Activated CD8-positive, alpha-beta memory T cell treated with anti-CD3 and anti-CD28 coated beads, Interleukin-2, amount 10 ng/mL, durations not matched to agents 7 days and 5 days (primary cell): ENCODE measurements at regions of chr5 and their contacts with region 1.

Region 1: GRCh38 chr5:170333161-170333910 is 35.8 kb upstream of the LCP2 start:
- DNase-seq: peak; percentile 86
- ATAC-seq: peak; percentile 46
- H3K4me3 Mint-ChIP-seq: peak overlapping the region; percentile 66
- H3K27ac Mint-ChIP-seq: no peak overlapping the region
- H3K4me1 Mint-ChIP-seq: peaks cover 27% of the 10 kb centered on the region
- H3K27me3 Mint-ChIP-seq: no peaks in the 10 kb centered on the region

Region 2: GRCh38 chr5:170132269-170132975 is 200.9 kb before region 1 on chr5:
- CTCF ChIA-PET with region 1: no interaction called
- DNase-seq: peak; percentile 15
- ATAC-seq: no peak
- H3K4me3 Mint-ChIP-seq: no peak overlapping the region
- H3K27ac Mint-ChIP-seq: no peak overlapping the region
- H3K4me1 Mint-ChIP-seq: no peaks in the 10 kb centered on the region
- H3K27me3 Mint-ChIP-seq: peaks cover 57% of the 10 kb centered on the region

Region 3: GRCh38 chr5:170262061-170263045 is 71.0 kb before region 1 on chr5:
- CTCF ChIA-PET with region 1: interaction called, 110 read pairs
- DNase-seq: peak; percentile 84
- ATAC-seq: peak; percentile 56
- H3K4me3 Mint-ChIP-seq: peak overlapping the region; percentile 38
- H3K27ac Mint-ChIP-seq: peak overlapping the region; percentile 89
- H3K4me1 Mint-ChIP-seq: peaks cover 93% of the 10 kb centered on the region
- H3K27me3 Mint-ChIP-seq: no peaks in the 10 kb centered on the region

Region 4: GRCh38 chr5:170278611-170279452 is 54.5 kb before region 1 on chr5:
- CTCF ChIA-PET with region 1: interaction called, 122 read pairs
- DNase-seq: peak; percentile 98
- ATAC-seq: peak; percentile 76
- H3K4me3 Mint-ChIP-seq: peak overlapping the region; percentile 65
- H3K27ac Mint-ChIP-seq: peak overlapping the region; percentile 88
- H3K4me1 Mint-ChIP-seq: peaks cover 92% of the 10 kb centered on the region
- H3K27me3 Mint-ChIP-seq: no peaks in the 10 kb centered on the region

Region 5: DNA sequence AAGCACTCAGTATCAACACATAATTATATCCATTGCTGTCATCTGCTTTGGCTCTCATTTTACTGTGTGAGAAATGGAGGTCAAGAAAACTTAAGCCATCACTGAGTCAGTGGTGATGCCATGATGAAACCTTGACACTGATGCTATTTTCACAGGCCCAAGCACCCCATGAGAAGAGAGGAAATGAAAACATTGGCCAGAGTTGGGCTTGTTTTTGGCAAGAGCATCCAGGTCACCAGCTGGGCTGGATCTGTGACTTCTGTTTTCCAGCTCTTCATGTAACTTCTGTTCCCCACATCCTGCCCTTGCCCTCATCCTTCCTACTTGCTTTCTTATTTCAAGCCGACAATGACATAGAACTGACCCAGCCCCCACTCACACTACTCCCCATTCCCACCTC is 45.8 kb before region 1 on chr5:
- CTCF ChIA-PET with region 1: interaction called, 234 read pairs
- DNase-seq: no peak
- ATAC-seq: peak; percentile 4
- H3K4me3 Mint-ChIP-seq: peak overlapping the region; percentile 95
- H3K27ac Mint-ChIP-seq: peak overlapping the region; percentile 78
- H3K4me1 Mint-ChIP-seq: peaks cover 100% of the 10 kb centered on the region
- H3K27me3 Mint-ChIP-seq: no peaks in the 10 kb centered on the region

Region 6: DNA sequence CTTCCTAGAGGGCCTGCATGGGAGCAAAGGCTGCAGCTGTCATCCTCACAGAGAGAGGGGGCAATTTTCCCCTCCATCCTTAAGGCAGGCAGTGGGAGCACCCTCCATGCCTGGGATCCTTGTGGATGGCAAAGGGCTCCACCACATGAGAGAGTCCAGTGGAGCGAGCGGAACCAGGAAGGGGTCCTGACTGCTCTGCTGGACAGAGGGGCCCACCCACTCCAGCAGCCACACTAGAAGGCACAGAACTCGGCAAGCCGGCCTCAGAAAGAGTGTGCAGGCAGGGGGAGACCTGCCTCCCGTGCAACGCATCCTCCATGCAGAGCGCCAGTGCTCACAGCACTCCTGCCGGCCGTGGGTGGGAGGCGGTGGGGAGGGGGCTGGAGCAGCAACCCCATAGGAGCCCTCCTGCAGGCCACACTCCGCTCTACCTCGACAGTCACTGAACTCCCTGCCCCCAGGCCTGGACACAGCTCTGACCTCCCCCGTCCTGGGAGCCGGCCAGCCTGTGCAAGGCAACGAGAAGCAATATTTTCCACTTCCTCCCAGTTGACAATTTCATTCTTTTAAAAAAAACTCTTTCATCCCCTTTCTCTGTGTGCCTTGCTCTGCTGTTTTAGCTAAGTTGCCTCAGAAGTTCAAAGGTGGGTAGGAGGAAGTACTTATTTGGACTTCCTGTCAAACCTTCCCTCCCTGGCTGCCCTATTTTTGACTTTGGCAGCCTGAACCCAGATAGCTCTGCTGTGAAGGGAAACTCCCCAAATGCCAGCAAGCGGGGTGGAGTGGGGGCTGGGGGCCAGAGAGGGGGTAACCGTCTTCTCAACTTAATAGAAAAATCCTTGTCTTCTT is 30.5 kb before region 1 on chr5:
- CTCF ChIA-PET with region 1: interaction called, 234 read pairs
- DNase-seq: peak; percentile 71
- ATAC-seq: peak; percentile 94
- H3K4me3 Mint-ChIP-seq: peak overlapping the region; percentile 62
- H3K27ac Mint-ChIP-seq: peak overlapping the region; percentile 94
- H3K4me1 Mint-ChIP-seq: peaks cover 66% of the 10 kb centered on the region
- H3K27me3 Mint-ChIP-seq: no peaks in the 10 kb centered on the region

Region 7: DNA sequence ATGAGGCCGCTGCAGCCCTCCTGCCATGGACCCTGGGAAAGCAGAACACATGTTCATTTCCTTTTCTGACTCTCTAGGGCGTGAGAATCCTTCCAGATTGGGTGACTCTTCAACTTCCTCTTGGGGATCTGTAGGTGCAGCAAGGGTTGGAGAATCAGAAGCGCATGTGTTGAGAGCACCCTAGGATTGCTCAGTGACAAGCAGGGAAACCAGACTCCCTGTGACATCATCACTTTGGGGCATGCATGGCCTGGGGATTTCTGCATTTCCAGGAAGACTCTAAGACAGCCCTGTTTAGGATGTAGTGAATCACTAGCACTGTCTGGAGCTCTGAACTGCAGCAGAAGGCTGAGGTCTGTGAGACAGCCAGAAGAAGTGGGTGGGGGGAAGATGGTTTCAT is 20.7 kb before region 1 on chr5:
- CTCF ChIA-PET with region 1: interaction called, 24 read pairs
- DNase-seq: peak; percentile 70
- ATAC-seq: peak; percentile 70
- H3K4me3 Mint-ChIP-seq: peak overlapping the region; percentile 32
- H3K27ac Mint-ChIP-seq: peak overlapping the region; percentile 73
- H3K4me1 Mint-ChIP-seq: peaks cover 31% of the 10 kb centered on the region
- H3K27me3 Mint-ChIP-seq: no peaks in the 10 kb centered on the region

Region 8: DNA sequence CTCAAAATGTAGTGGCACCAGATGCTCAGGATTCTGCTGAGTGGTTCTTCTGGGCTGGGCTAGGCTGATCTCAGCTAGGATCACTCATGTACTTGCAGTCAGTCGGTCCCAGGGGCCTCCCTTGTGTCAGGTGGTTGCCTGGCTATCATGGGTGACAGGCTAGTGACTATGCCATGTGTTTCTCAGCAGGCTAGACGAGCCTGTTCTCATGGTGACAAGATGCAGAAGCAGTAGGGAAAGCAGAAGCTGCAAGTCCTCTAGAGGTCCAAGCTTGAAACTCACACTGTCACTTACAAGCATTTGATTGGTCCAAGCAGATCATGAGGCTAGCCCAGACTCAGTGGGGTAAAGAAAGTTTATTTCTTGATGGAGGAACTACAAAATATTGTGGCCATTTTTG is 71.1 kb after region 1 on chr5:
- CTCF ChIA-PET with region 1: no interaction called
- DNase-seq: no peak
- ATAC-seq: no peak
- H3K4me3 Mint-ChIP-seq: no peak overlapping the region
- H3K27ac Mint-ChIP-seq: no peak overlapping the region
- H3K4me1 Mint-ChIP-seq: no peaks in the 10 kb centered on the region
- H3K27me3 Mint-ChIP-seq: peaks cover 14% of the 10 kb centered on the region